Activated B cell treated with CpG ODN at 0.5 μM for 24 hours (primary cell): ENCODE measurements at regions of chr7 and their contacts with region 1.

Region 1: DNA sequence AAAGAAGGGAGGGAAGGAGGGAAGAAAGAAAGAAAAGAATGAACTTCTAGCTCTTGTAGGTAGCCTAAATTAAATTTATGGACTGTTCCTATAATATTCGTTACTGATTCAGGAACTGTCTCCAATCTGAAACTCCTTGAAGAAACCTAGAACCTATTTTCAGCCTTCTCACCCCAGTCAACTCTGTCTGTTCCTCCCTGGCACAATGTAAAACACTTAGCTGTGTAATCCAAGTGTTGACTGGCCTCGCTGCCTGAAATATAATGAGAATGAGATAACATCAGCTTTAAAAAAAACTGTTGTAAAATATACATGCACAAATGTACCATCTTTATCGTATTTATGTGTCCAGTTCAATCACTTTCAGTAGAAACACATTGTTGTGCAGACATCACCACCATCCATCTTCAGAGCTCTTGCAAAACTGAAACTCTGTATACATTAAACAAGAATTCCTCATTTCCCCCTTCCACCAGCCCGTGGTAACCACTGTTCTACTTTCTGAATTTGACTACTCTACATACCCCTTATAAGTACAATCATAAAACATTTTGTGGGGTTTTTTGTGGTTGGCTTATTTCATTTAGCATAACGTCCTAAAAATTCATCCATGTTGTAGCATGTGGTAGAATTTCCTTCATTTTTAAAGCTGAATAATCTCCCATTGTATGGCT is 6.3 kb upstream of the C7orf33 start:
- DNase-seq: no peak
- ATAC-seq: no peak
- H3K4me3 Mint-ChIP-seq: no peak overlapping the region
- H3K27ac Mint-ChIP-seq: no peak overlapping the region
- H3K4me1 Mint-ChIP-seq: peaks cover 6% of the 10 kb centered on the region
- H3K27me3 Mint-ChIP-seq: no peaks in the 10 kb centered on the region
- CTCF ChIP-seq: no peak

Region 2: DNA sequence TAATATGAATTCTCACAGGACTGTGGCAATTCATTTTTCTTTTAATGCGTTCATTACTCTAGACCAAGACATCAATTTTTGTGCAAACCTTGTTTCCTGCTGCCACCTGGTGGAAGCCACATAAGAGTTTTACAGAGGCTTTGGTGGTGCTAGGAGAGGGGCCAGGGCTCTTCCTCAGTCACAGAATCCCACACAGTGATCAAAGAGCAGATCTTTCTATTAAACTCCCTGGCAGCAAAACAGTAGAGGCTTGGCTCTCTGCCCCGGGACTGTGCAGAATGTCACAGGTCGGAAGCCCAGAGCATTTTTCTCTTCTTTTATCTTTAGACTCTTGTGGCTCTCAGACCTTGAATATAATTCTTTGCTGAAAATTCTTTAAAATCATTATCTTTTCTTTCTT is 500.2 kb before region 1 on chr7:
- CTCF ChIA-PET with region 1: no interaction called
- POLR2A ChIA-PET with region 1: no interaction called
- intact Hi-C with region 1: no loop called
- DNase-seq: no peak
- ATAC-seq: no peak
- H3K4me3 Mint-ChIP-seq: no peak overlapping the region
- H3K27ac Mint-ChIP-seq: no peak overlapping the region
- H3K4me1 Mint-ChIP-seq: no peaks in the 10 kb centered on the region
- H3K27me3 Mint-ChIP-seq: peaks cover 11% of the 10 kb centered on the region
- CTCF ChIP-seq: no peak

Region 3: GRCh38 chr7:148276314-148277041 is 307.8 kb before region 1 on chr7:
- CTCF ChIA-PET with region 1: no interaction called
- POLR2A ChIA-PET with region 1: no interaction called
- intact Hi-C with region 1: no loop called
- DNase-seq: no peak
- ATAC-seq: peak; percentile 52
- H3K4me3 Mint-ChIP-seq: peak overlapping the region; percentile 28
- H3K27ac Mint-ChIP-seq: no peak overlapping the region
- H3K4me1 Mint-ChIP-seq: peaks cover 30% of the 10 kb centered on the region
- H3K27me3 Mint-ChIP-seq: no peaks in the 10 kb centered on the region
- CTCF ChIP-seq: no peak

Region 4: GRCh38 chr7:148611692-148612091 is 27.4 kb after region 1 on chr7:
- CTCF ChIA-PET with region 1: no interaction called
- POLR2A ChIA-PET with region 1: interaction called, 10 read pairs
- intact Hi-C with region 1: no loop called
- DNase-seq: no peak
- ATAC-seq: no peak
- H3K4me3 Mint-ChIP-seq: no peak overlapping the region
- H3K27ac Mint-ChIP-seq: no peak overlapping the region
- H3K4me1 Mint-ChIP-seq: no peaks in the 10 kb centered on the region
- H3K27me3 Mint-ChIP-seq: peaks cover 19% of the 10 kb centered on the region
- CTCF ChIP-seq: no peak